Mammary epithelial cell (primary cell): ENCODE measurements at regions of chr14 and their contacts with region 1.

Region 1: DNA sequence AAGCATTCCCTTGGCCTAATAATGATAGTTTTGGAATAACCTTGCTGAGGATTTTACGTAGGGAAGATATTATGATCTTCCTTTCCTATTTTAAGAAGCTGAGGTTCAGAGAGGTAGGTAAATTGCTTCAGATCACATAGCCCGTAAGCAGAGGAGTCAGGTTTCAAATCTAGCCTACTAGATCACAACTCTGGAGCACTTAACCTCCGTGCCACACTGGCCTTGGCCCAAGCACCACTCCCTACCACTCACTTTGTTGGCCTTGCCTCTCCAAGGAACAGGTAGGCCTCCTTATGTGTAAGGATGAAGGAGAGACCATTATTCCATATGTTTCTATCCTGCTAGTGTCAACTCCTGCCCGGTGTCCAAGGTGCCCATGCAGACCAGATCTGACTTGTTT is 12.4 kb upstream of the ACOT1 start:
- DNase-seq: no peak
- H3K4me3 ChIP-seq: no peak overlapping the region
- H3K27ac ChIP-seq: no peak overlapping the region
- H3K4me1 ChIP-seq: peaks cover 13% of the 10 kb centered on the region
- H3K27me3 ChIP-seq: no peaks in the 10 kb centered on the region
- CTCF ChIP-seq: no peak

Region 2: GRCh38 chr14:73245401-73246325 is 278.8 kb before region 1 on chr14:
- CTCF ChIA-PET with region 1: no interaction called
- dilution Hi-C with region 1: no loop called
- in situ Hi-C with region 1: no loop called
- intact Hi-C with region 1: no loop called
- DNase-seq: peak; percentile 57
- H3K4me3 ChIP-seq: peak overlapping the region; percentile 64 to 79 (median 74)
- H3K27ac ChIP-seq: peak overlapping the region; percentile 7
- H3K4me1 ChIP-seq: peaks cover 24% of the 10 kb centered on the region
- H3K27me3 ChIP-seq: no peaks in the 10 kb centered on the region
- CTCF ChIP-seq: no peak

Region 3: DNA sequence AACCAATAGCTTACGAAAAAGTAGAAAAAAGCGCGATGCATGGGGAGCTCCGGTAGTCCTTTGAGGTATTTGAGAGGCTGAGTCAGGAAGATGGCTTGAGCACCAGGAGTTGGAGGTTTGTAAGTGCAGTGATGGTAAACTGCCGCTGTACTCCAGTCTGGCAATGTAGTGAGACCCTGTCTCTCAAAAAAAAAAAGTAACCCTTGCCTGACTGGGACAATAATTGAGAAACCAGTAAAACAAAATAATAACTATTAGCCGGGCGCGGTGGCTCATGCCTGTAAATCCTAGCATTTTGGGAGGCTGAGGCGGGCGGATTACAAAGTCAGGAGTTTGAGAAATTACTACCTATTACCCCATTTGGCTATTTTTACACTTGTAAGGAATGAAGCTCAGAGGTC is 43.9 kb after region 1 on chr14:
- CTCF ChIA-PET with region 1: no interaction called
- dilution Hi-C with region 1: loop called (anchors 5 kb)
- in situ Hi-C with region 1: no loop called
- intact Hi-C with region 1: no loop called
- DNase-seq: peak; percentile 50
- H3K4me3 ChIP-seq: peak overlapping the region; percentile 40 to 60 (median 56)
- H3K27ac ChIP-seq: peak overlapping the region; percentile 65
- H3K4me1 ChIP-seq: peaks cover 22% of the 10 kb centered on the region
- H3K27me3 ChIP-seq: no peaks in the 10 kb centered on the region
- CTCF ChIP-seq: no peak

Region 4: DNA sequence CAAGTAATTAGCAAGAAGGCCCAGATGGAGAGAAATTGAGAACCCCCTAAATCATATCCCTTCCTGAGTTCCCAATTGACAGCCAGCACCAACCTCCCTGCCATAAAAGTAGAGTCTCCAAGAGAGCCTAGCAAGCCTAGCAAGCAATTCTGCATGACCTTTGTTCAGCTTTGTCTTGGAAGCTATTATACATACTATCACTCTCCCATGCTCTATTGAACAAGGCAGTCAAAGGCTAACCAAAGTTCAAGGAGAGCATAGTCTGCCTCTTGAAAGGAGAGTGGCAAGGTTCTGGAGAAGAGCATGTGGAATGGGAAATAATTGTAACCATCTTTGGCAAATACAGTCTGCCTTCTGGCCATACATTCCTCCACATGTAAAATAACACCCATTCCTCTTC is 75.0 kb after region 1 on chr14:
- CTCF ChIA-PET with region 1: no interaction called
- dilution Hi-C with region 1: loop called (anchors 5 kb)
- in situ Hi-C with region 1: no loop called
- intact Hi-C with region 1: no loop called
- DNase-seq: no peak
- H3K4me3 ChIP-seq: no peak overlapping the region
- H3K27ac ChIP-seq: no peak overlapping the region
- H3K4me1 ChIP-seq: peaks cover 19% of the 10 kb centered on the region
- H3K27me3 ChIP-seq: no peaks in the 10 kb centered on the region
- CTCF ChIP-seq: no peak